Body of pancreas (tissue), 4 donors: ENCODE measurements at regions of chr16 and their contacts with region 1.

Region 1: GRCh38 chr16:17467923-17468540 is 2.7 kb downstream of the XYLT1 start:
- DNase-seq: peak; percentile 65 to 78 (median 70)
- ATAC-seq: peak; percentile 41
- H3K4me3 ChIP-seq: no peak overlapping the region
- H3K27ac ChIP-seq: no peak overlapping the region
- H3K4me1 ChIP-seq: peaks cover 33% of the 10 kb centered on the region
- H3K27me3 ChIP-seq: no peaks in the 10 kb centered on the region
- CTCF ChIP-seq: peak; percentile 28 to 76 (median 62)
- POLR2A ChIP-seq: no peak

Region 2: GRCh38 chr16:17196526-17196925 is 271.5 kb before region 1 on chr16:
- intact Hi-C with region 1: loop called (anchors 5 kb)
- DNase-seq: no peak
- ATAC-seq: no peak
- H3K4me3 ChIP-seq: no peak overlapping the region
- H3K27ac ChIP-seq: no peak overlapping the region
- H3K4me1 ChIP-seq: no peaks in the 10 kb centered on the region
- H3K27me3 ChIP-seq: no peaks in the 10 kb centered on the region
- CTCF ChIP-seq: no peak
- POLR2A ChIP-seq: no peak

Region 3: DNA sequence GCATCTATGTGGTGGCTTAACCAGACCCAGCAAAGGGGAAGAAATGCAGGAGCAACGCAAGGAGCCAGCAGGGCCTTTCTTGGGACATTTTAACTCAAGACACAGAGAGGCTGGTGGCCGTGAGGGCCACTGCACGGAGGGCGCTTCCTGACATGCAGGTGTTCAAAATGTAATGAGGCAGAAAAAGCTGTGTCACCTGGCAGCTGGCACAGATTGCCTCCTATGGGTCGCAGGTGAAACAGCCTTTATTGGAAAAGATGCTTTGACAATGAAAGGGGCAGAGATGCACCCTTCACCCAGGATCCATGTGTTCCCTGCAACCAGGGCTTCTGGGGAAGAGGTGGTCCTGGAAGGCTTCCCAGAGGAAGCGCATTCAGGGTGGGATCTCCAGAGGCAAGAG is 216.5 kb before region 1 on chr16:
- intact Hi-C with region 1: no loop called
- DNase-seq: no peak
- ATAC-seq: no peak
- H3K4me3 ChIP-seq: no peak overlapping the region
- H3K27ac ChIP-seq: no peak overlapping the region
- H3K4me1 ChIP-seq: peaks cover 13% of the 10 kb centered on the region
- H3K27me3 ChIP-seq: no peaks in the 10 kb centered on the region
- CTCF ChIP-seq: no peak
- POLR2A ChIP-seq: no peak

Region 4: DNA sequence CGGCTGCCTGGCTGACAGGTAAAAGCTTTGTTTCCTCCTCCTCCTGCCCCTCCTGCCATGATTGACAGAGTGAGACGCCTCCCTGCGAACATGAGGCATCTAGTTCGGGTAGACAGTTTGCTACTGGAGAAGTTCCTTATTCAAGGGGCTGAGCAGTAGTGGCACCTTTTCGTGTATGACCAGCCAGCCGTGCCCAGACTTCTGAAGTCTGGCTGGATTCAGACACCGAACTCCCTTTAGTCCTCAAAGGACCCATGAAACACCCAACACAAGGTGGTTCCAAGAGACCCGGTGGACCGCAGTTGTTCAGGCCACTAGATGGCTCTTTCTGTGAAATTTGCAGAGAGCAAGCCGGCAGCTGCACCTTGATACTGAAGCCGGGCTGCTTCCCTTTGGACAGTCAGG is 190.1 kb before region 1 on chr16:
- intact Hi-C with region 1: loop called (anchors 10 kb)
- DNase-seq: peak; percentile 67 to 79 (median 71)
- ATAC-seq: peak; percentile 73
- H3K4me3 ChIP-seq: no peak overlapping the region
- H3K27ac ChIP-seq: peak overlapping the region; percentile 49 to 70 (median 68)
- H3K4me1 ChIP-seq: peaks cover 43% of the 10 kb centered on the region
- H3K27me3 ChIP-seq: no peaks in the 10 kb centered on the region
- CTCF ChIP-seq: peak; percentile 31 to 70 (median 59)
- POLR2A ChIP-seq: no peak

Region 5: GRCh38 chr16:17416461-17417311 is 51.3 kb before region 1 on chr16:
- intact Hi-C with region 1: loop called (anchors 10 kb)
- DNase-seq: peak; percentile 21 to 59 (median 28)
- ATAC-seq: peak; percentile 73
- H3K4me3 ChIP-seq: no peak overlapping the region
- H3K27ac ChIP-seq: peak overlapping the region in 3 of 4 donors; percentile 14 to 61 (median 48)
- H3K4me1 ChIP-seq: peaks cover 19% of the 10 kb centered on the region
- H3K27me3 ChIP-seq: no peaks in the 10 kb centered on the region
- CTCF ChIP-seq: peak in 4 of 7 experiments; percentile 12 to 25 (median 18)
- POLR2A ChIP-seq: no peak